PC-9 (cell line): ENCODE measurements at regions of chr4 and their contacts with region 1.

Region 1: DNA sequence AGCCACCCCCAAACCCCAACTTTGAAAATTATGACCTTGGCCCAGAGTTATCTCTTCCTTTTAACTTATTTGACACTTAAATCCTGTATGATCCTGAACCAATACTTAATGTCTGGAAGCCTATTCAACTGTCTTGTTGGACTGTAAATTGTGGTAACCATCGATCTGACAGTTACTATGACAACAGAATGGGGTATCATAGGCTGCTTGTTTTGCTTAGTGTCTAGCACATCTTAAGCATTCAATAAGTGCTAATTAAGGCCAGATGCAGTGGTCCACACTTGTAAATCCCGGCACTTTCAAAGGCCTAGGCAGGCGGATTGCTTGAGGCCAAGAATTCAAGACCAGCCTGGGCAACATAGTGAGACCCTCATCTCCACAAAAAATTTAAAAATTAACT is 175.0 kb downstream of the APBB2 start:
- DNase-seq: no peak
- H3K4me3 ChIP-seq: no peak overlapping the region
- H3K27ac ChIP-seq: no peak overlapping the region
- H3K4me1 ChIP-seq: no peaks in the 10 kb centered on the region
- H3K27me3 ChIP-seq: no peaks in the 10 kb centered on the region
- CTCF ChIP-seq: no peak

Region 2: GRCh38 chr4:41060352-41061334 is 21.3 kb after region 1 on chr4:
- CTCF ChIA-PET with region 1: no interaction called
- POLR2A ChIA-PET with region 1: no interaction called
- intact Hi-C with region 1: no loop called
- DNase-seq: no peak
- H3K4me3 ChIP-seq: no peak overlapping the region
- H3K27ac ChIP-seq: no peak overlapping the region
- H3K4me1 ChIP-seq: 0 out of 2 replicates have a peak, but pooled peaks cover 4% of the 10 kb centered on the region
- H3K27me3 ChIP-seq: no peaks in the 10 kb centered on the region
- CTCF ChIP-seq: no peak

Region 3: DNA sequence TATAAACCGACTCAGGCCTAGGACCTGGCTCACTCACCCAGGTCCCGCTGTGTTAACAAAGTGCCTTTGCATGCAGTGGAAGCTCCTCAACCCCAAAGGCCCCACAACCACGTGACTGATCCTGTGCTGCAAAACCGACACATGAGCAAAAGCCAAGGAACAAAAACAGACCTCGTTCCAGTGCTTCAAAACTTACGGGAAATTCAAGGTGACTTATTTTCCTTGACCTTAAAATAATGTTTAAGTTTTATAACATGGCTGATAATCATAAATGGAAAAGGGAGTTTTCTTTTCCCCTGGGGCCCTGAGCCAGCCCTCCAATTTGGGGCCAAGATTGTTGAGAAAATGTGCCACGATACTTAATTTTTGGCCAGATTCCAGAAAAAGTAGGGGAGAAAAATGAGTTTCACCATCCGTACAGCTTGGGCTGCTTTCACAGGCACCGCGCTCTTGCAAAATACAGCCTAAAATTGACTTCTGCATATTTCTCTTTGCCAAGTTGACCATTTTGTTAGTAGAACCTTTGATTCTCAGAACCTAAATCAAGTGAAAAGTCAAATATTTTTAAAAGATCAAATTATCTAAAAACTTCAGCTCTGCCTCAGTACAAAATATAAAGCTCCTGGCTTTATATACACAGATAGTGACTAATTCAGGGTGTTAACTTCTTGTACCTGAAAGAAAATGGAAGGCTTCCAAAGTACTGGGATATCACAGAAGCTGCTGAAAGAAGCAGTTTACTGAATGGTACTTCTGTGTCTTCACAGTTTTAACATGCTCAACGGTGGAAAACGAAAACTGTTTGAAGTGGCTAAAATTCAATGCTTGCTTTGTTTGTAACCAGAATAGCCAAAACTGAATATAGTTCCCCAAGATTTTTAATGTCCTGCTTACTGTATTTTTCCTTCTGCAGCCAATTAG is 81.2 kb after region 1 on chr4:
- CTCF ChIA-PET with region 1: no interaction called
- POLR2A ChIA-PET with region 1: interaction called, 39 read pairs
- intact Hi-C with region 1: no loop called
- DNase-seq: no peak
- H3K4me3 ChIP-seq: no peak overlapping the region
- H3K27ac ChIP-seq: no peak overlapping the region
- H3K4me1 ChIP-seq: no peaks in the 10 kb centered on the region; the same call in 1 of the 2 replicates
- H3K27me3 ChIP-seq: no peaks in the 10 kb centered on the region
- CTCF ChIP-seq: no peak